Right lobe of liver (tissue), 6 donors: ENCODE measurements at regions of chr20 and their contacts with region 1.

Region 1: DNA sequence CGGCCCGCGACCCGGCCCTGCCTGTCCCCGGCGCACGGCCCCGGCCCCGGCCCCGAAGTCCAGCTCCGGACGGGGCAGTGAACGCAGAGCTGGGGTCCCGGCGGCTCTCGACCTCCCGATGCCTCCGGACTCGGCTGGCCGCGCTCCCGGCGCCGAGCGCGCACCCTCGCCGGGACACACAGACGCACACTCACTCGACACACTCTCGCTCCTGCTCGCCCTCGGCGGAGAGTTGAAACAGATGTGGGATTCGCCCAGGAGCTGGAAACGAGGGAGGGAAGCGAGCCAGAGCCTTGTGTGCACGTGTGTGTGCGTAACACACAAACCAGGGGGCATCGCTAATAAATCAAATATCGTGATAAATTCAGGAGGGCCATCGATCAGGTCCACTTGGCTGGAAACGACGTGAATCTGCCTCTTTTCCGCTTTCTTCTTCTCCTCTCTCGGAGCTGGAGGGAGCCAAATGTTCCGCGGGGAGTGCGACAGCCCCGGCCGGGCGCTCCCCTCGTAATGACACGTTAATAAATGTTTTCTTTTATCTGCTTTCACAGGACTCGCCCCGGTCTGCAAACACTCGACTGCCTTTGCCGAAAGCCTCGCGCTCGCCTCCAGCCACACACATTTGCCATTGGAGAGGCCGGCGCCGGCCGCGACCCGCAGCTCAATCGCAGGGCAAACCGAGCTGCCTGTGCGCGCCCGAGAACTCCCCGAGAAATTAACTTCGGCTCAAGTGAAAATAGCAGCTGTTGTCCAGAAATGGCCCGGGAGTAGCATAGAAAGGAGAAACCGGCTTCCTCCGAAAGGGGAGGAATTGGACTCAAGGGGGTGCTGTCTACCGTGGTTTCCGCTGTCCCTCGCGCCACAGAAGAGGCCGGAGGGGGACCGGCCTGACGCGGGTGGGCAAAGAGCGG is 828 bp upstream of the SULF2 start:
- DNase-seq: peak; percentile 49 to 76 (median 66)
- ATAC-seq: peak; percentile 76 to 85 (median 77)
- H3K4me3 ChIP-seq: peak overlapping the region; percentile 33 to 53 (median 48)
- H3K27ac ChIP-seq: peak overlapping the region in 2 of 3 donors; percentile 30 to 51
- H3K4me1 ChIP-seq: peaks cover 0 to 16% (median 2%) of the 10 kb centered on the region in 4 donors
- H3K27me3 ChIP-seq: no peaks in the 10 kb centered on the region
- CTCF ChIP-seq: peak; percentile 56 to 68 (median 57)
- POLR2A ChIP-seq: peak; percentile 35

Region 2: DNA sequence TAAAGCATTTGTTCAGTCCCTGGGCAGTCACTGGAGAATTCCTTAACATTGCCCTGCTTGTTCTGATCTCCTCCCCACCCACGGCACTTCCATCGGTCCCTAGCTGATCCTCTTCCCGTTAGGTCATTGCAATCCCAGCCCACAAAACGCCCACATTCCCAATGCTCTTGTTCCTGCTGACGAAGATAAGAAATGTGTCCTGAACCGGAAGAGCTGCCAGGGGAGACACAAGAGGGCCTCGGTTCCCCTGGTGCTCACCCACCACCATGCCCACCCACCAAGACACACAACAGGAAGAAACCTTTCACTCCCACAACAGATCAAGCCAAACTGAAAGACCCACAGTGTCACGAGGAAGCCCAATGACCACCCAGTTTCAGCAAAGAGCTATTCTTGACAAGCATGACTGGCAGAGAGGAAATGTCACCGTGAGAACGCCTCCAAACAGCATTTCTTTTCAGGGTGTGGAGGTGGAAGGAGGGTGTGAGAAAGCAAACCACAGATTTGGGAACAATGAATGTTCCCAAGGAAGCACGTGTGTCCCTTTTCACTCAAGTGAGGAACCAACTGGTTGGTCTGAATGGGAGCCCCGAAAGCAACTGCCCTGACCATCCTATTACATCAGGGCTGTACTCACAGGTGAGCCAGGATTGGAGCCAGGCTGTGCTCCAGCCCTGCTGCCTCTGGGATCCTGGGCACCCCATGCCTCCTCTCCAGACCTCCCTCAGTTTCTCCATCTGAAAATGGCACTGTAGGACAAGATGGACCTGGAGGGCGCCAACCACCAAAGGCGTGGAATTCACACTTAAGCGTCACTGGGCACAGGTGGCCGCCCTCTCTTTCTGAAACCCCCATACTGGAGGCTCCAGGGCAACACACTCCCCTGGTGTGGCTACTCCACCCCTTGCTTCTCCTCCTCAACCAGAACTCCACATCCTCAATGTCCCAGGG is 527.1 kb before region 1 on chr20:
- intact Hi-C with region 1: no loop called
- DNase-seq: no peak
- ATAC-seq: peak in 3 of 4 donors; percentile 23 to 26 (median 23)
- H3K4me3 ChIP-seq: no peak overlapping the region
- H3K27ac ChIP-seq: no peak overlapping the region
- H3K4me1 ChIP-seq: peaks cover 0 to 11% (median 5%) of the 10 kb centered on the region in 4 donors
- H3K27me3 ChIP-seq: no peaks in the 10 kb centered on the region
- CTCF ChIP-seq: no peak
- POLR2A ChIP-seq: no peak

Region 3: DNA sequence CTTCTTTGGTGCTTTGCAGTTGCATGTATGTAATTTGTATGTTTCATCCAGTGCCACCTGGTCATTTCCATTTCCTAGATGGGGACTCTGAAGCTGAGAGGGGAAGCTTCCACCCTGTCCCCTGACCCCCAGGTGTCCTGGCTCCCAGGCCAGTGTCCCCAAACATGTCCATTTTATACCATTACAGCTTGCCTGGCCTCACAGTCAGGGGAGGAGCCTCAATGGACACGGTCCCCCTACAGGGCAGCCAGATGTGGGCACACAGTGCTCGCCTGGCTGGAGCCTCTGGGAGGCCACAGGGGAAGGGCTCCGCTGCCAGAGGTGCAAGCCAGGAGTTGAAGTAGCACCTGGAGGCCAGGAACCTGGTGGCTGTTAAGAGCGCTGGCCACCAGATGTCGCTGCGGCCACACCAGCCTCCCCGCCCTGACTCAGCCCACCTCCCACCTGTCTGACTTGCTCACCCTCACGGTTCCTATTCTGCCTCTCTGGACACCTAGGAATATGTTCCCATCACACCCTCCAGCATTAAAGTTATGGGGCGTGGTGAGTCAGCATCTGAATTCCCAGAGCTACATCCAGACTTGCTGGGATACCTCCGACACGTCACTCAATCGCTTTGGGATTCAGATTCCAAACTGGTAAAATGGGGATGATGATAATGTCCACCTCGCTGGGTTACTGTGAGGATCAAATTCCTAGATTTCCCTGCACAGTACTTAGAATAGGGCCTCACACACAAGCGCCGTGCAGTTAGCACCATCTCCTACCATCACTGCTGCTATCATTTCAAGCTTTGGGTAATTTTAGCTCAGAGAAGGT is 108.3 kb before region 1 on chr20:
- intact Hi-C with region 1: loop called in 1 of 2 experiments (anchors 10 kb)
- DNase-seq: peak in 2 of 3 donors; percentile 55 to 67
- ATAC-seq: peak; percentile 71 to 80 (median 76)
- H3K4me3 ChIP-seq: no peak overlapping the region
- H3K27ac ChIP-seq: no peak overlapping the region
- H3K4me1 ChIP-seq: no peaks in the 10 kb centered on the region
- H3K27me3 ChIP-seq: no peaks in the 10 kb centered on the region
- CTCF ChIP-seq: peak; percentile 67 to 87 (median 84)
- POLR2A ChIP-seq: no peak